ENCODE measurements at regions of chr16 and their contacts with region 1.

Region 1: DNA sequence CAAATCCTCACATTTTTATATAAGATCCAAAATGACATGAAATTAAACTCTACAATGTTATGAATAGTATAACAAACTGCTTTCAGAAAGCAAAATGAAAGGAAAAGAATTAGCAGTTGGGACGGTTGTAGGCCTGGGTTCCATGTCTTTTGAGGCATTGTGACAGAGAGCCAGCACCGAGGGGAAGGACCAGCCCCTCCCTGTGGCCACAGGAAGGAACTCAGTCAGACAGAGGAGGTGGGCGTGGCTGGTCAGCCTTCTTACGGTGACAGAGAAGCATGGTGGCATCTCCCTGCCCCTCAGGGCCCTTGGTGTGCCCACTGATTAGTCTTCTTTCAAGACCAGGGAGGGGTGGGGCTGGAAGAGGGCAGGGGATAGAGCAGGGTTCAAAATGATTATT is 5.7 kb downstream of the ZNF319 start:
- DNase-seq: peak; percentile 58 to 69
- H3K4me3 ChIP-seq: no peak overlapping the region
- H3K27ac ChIP-seq: no peak overlapping the region
- H3K4me1 ChIP-seq: peaks cover 68% of the 10 kb centered on the region
- H3K27me3 ChIP-seq: no peaks in the 10 kb centered on the region
- CTCF ChIP-seq: peak; percentile 63

Region 2: DNA sequence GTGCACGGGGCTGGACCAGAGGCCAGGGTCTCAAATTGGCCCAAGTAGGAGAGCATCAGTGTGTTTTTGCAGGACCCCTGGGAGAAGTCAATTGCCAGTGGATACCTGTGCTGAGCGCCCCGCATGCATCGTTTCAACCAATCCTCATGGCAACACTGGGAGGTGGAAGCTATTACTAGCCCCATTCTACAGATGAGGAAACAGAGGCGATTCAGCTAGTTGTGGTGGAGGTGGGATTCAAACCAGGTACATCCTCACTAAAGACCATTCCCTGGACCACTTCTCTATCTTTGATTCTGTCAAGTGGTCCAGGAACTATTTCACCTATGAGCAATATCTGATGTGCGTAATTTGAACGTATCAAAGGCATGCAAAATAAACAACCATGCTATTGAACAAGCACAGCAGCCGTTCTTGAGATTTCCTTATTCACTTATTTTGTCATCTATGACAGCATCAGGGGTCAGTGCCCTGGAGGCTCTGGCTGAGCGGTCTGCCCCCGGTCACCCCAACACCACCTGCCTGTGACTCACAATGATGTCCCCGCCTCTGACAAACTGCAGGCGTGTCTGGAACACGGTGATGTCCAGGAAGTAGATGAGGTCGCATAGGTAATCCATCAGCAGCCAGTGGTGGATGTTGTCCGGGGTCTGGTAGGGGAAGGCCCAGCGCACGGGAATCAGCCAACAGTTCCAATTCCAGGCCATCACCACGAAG is 77.9 kb before region 1 on chr16:
- CTCF ChIA-PET with region 1: no interaction called
- POLR2A ChIA-PET with region 1: interaction called, 3 read pairs
- intact Hi-C with region 1: loop called (anchors 5 kb)
- DNase-seq: peak; percentile 82 to 97
- H3K4me3 ChIP-seq: peak overlapping the region; percentile 3; the same call in 1 of the 2 replicates
- H3K27ac ChIP-seq: peak overlapping the region; percentile 33; the same call in 1 of the 2 replicates
- H3K4me1 ChIP-seq: peaks cover 27% of the 10 kb centered on the region
- H3K27me3 ChIP-seq: no peaks in the 10 kb centered on the region
- CTCF ChIP-seq: no peak

Region 3: DNA sequence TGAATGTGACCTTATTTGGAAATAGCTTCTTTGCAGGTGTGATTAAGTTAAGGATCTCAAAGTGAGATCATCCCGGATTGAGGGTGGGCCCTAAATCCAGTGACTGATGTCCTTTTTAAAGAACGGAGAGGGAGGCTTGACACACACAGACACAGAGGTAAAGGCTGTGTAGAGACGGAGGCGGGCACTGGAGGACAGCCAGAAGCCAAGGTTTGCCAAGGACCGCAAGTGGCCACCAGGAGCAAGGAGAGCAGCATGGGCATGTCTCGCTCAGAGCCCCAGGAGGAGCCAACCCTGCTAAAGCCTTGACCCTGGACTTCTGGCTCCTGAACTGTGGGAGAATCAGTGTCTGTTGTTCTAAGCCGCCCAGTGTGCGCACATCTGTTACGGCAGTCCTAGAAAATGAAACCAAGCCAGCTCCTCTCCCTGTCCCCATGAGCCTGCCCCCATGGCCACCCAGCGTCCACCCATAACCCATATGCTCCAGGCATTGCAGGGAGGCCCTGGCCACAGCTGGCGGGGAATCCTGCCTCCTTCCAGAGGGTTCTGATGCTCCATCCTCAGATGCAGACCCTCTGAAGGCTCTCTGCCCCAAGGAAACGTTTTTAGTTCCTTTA is 39.1 kb before region 1 on chr16:
- CTCF ChIA-PET with region 1: no interaction called
- POLR2A ChIA-PET with region 1: interaction called, 20 read pairs
- intact Hi-C with region 1: loop called (anchors 2 kb)
- DNase-seq: peak in 1 of 2 experiments; percentile 39
- H3K4me3 ChIP-seq: no peak overlapping the region
- H3K27ac ChIP-seq: no peak overlapping the region
- H3K4me1 ChIP-seq: peaks cover 29% of the 10 kb centered on the region
- H3K27me3 ChIP-seq: no peaks in the 10 kb centered on the region
- CTCF ChIP-seq: no peak

Region 4: GRCh38 chr16:58129097-58129936 is 134.5 kb after region 1 on chr16 and contains the start of gene CFAP20:
- CTCF ChIA-PET with region 1: no interaction called
- POLR2A ChIA-PET with region 1: interaction called, 15 read pairs
- intact Hi-C with region 1: no loop called
- DNase-seq: peak; percentile 98 to 99
- H3K4me3 ChIP-seq: peak within 1 kb of the TSS; percentile 88
- H3K27ac ChIP-seq: peak within 1 kb of the TSS; percentile 57
- H3K4me1 ChIP-seq: peaks cover 34% of the 10 kb centered on the region
- H3K27me3 ChIP-seq: no peaks in the 10 kb centered on the region
- CTCF ChIP-seq: no peak
- total RNA-seq, gene CFAP20: 35.9 and 49.6 TPM in 2 replicates